ENCODE measurements at regions of chr11 and their contacts with region 1.

Region 1: GRCh38 chr11:126949066-126949891 is 51.3 kb downstream of the KIRREL3 start:
- DNase-seq: peak; percentile 93
- ATAC-seq: peak; percentile 88
- H3K4me3 ChIP-seq: no peak overlapping the region
- H3K27ac ChIP-seq: no peak overlapping the region
- H3K4me1 ChIP-seq: peaks cover 7% of the 10 kb centered on the region
- H3K27me3 ChIP-seq: no peaks in the 10 kb centered on the region
- CTCF ChIP-seq: no peak
- POLR2A ChIP-seq: no peak
- RAD21 ChIP-seq: no peak

Region 2: DNA sequence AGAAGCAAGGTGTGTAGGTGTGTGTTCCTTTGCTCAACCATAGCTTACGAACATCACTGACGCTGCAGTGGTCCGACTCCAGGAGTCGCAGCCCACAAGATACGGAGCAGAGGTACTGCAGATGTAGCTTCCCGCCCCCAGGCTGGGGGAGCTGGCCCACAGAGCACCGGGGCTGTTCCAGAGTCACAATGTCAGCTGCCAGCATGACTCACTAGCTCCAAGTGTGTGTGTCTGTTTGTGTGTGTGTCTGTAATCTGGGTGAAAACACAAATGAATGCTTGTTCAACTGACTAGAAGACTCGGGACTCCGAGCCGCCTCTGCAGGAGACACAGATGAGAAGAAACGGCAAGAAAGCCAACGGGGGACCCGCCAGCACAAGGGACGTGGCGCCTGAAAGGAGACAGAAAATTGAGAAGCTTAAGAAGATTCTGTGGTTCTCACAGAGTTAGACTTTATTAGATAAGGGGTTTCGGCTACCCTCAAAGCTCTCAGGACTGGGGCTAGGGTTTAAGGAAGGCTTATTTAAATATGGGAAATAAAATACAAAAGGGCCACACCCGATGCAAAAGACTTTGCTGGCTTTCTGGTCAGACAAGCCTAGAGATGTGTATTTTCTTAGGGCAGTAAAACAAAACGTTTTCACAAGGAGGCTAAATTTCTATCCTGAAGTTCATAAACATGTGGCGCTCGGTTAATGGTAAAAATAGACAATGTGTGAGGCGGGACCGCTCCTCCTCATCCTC is 992.7 kb before region 1 on chr11:
- CTCF ChIA-PET with region 1: no interaction called
- POLR2A ChIA-PET with region 1: no interaction called
- dilution Hi-C with region 1: no loop called
- in situ Hi-C with region 1: no loop called
- intact Hi-C with region 1: no loop called
- DNase-seq: peak; percentile 7
- ATAC-seq: no peak
- H3K4me3 ChIP-seq: no peak overlapping the region
- H3K27ac ChIP-seq: no peak overlapping the region
- H3K4me1 ChIP-seq: no peaks in the 10 kb centered on the region
- H3K27me3 ChIP-seq: peaks cover 4% of the 10 kb centered on the region
- CTCF ChIP-seq: no peak
- POLR2A ChIP-seq: no peak
- RAD21 ChIP-seq: no peak

Region 3: DNA sequence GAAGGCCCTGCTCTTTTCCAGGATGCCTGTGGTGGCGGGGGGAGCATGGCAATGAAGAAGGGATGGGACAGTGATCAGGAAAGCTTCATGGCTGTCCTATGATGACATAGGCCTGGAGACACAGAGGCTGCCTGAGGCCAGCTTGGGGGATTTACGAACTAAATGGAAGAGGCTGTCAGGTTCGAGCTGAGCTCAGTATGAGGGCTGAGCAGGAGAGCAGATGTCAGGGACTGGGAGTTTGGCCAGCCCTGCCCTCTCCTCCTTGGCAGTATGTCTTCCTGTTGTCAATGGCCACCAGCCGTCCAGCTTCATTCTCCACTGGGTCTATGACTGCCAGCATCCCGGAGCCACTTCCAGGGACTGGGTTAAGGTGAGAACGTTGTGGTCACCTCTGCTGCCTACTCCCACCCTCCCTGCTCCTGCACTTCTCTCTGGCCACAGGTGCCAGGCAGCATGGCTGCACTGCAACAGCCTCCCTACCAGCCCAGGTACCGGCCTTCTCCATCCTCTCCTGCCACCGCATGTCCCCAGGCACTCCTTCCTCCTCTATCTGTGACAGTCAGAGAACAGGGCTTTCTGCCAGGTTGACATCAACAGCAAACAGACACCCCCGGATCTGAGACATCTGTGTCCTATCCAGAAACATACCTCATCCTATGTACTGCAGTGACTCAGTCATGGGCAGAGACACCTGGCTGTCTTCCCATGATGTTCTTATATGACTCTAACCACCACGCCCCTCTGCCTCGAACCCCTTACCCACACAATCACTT is 23.8 kb before region 1 on chr11:
- CTCF ChIA-PET with region 1: no interaction called
- POLR2A ChIA-PET with region 1: no interaction called
- dilution Hi-C with region 1: no loop called
- in situ Hi-C with region 1: no loop called
- intact Hi-C with region 1: loop called (anchors 2 kb)
- DNase-seq: peak; percentile 79
- ATAC-seq: no peak
- H3K4me3 ChIP-seq: no peak overlapping the region
- H3K27ac ChIP-seq: no peak overlapping the region
- H3K4me1 ChIP-seq: peaks cover 19% of the 10 kb centered on the region
- H3K27me3 ChIP-seq: no peaks in the 10 kb centered on the region
- CTCF ChIP-seq: no peak
- POLR2A ChIP-seq: no peak
- RAD21 ChIP-seq: no peak

Measured in IMR-90 (cell line).